Esophagus squamous epithelium (tissue), 5 donors: ENCODE measurements at regions of chr2 and their contacts with region 1.

Region 1: DNA sequence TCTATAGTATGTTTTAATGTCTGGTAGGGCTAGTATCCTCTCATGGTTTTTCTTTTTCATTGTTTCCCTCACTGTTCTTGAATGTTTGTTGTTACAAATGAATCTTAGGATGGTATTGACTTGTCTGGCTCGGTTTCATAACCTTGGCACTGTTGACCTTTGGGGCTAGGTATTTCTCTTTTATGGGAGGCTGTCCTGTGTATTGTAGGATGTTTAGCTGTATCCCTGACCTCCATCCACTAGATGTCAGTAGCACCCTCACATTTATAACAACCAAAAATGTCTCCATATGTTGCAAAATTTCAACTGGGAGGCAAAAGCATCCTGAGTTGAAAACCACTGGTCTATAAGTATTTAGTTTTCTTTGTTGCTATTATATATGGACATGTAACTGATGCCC is 7.0 kb upstream of the AOX1 start:
- DNase-seq: no peak
- H3K4me3 ChIP-seq: no peak overlapping the region
- H3K27ac ChIP-seq: no peak overlapping the region
- H3K4me1 ChIP-seq: no peaks in the 10 kb centered on the region
- H3K27me3 ChIP-seq: no peaks in the 10 kb centered on the region
- CTCF ChIP-seq: peak in 5 of 6 experiments; percentile 30 to 68 (median 38)
- POLR2A ChIP-seq: no peak

Region 2: DNA sequence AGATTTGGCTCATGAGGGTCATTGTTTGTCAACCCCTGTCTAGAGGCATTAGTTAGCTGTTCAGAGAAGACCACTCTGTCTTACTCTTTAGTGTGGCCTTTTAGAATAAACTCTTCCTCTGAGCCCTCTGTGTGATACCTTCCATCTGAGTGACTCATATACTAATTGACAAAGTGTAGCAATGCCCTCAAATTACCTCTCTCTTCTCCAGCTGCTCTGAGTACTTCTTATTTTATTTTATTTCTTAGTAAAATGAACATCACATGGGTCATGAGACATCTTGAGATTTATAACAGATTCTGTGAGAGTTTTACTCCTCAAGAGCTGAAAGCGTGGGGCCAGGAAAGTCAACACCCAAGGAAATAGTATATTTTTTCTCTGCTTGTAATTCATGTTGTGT is 136.3 kb before region 1 on chr2:
- intact Hi-C with region 1: no loop called
- DNase-seq: no peak
- H3K4me3 ChIP-seq: no peak overlapping the region
- H3K27ac ChIP-seq: no peak overlapping the region
- H3K4me1 ChIP-seq: no peaks in the 10 kb centered on the region
- H3K27me3 ChIP-seq: no peaks in the 10 kb centered on the region
- CTCF ChIP-seq: no peak
- POLR2A ChIP-seq: no peak

Region 3: GRCh38 chr2:200703127-200703925 is 124.5 kb after region 1 on chr2:
- intact Hi-C with region 1: loop called (anchors 10 kb)
- DNase-seq: no peak
- H3K4me3 ChIP-seq: no peak overlapping the region
- H3K27ac ChIP-seq: no peak overlapping the region
- H3K4me1 ChIP-seq: no peaks in the 10 kb centered on the region
- H3K27me3 ChIP-seq: no peaks in the 10 kb centered on the region
- CTCF ChIP-seq: peak; percentile 13 to 66 (median 38)
- POLR2A ChIP-seq: no peak

Region 4: GRCh38 chr2:200829258-200829655 is 250.5 kb after region 1 on chr2:
- intact Hi-C with region 1: no loop called
- DNase-seq: no peak
- H3K4me3 ChIP-seq: no peak overlapping the region
- H3K27ac ChIP-seq: no peak overlapping the region
- H3K4me1 ChIP-seq: no peaks in the 10 kb centered on the region
- H3K27me3 ChIP-seq: no peaks in the 10 kb centered on the region
- CTCF ChIP-seq: no peak
- POLR2A ChIP-seq: no peak